ENCODE measurements at regions of chr11 and their contacts with region 1.

Region 1: DNA sequence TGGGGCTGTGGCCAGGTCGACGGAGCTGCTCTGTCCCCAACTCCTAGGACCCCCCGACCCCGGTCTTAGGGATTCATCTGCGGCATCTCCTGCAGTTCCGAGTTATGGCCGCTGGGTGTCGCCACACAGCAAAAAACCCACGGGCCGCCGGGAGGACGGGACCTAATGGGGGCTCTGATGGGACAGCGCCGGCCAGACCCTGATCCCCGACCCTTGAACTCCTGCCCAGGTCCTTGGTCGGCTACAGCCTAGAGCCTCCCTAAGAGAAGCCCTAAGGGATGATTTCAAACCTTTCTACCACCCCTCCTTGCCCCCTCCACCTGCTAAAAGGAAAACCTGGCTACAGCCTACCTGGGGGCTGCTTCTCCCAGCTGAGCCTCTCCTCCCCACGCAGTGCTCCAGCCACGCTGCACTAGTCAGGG is 30.8 kb upstream of the LRRC10B start:
- DNase-seq: peak; percentile 56
- H3K4me3 ChIP-seq: no peak overlapping the region
- H3K27ac ChIP-seq: no peak overlapping the region
- H3K4me1 ChIP-seq: peaks cover 26% of the 10 kb centered on the region
- H3K27me3 ChIP-seq: no peaks in the 10 kb centered on the region

Region 2: DNA sequence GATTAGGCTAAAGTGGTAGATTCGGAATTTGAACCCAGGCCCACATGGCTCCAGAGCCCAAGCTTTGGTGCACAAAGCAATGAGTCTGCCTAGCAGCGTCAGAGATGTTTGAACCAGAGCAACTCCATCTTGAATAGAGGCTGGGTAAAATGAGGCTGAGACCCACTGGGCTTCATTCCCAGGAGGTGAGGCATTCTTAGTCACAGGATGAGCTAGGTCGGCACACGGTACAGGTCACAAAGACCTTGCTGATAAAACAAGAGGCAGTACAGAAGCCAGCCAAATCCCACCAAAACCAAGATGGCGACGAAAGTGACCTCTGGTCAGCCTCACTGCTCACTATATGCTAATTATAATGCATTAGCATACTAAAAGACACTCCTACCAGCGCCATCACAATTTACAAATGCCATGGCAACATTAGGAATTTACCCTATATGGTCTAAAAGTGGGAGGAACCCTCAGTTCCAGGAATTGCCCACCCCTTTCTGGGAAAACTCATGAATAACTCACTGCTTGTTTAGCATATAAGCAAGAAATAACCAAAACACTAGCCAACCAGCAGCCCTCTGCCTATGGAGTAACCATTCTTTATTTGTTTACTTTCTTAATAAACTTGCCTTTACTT is 162.2 kb after region 1 on chr11:
- in situ Hi-C with region 1: loop called (anchors 10 kb)
- DNase-seq: peak; percentile 26
- H3K4me3 ChIP-seq: no peak overlapping the region
- H3K27ac ChIP-seq: no peak overlapping the region
- H3K4me1 ChIP-seq: no peaks in the 10 kb centered on the region
- H3K27me3 ChIP-seq: 0 out of 2 replicates have a peak, but pooled peaks cover 6% of the 10 kb centered on the region

Measured in GM23248 (cell line).